Activated CD4-positive, alpha-beta T cell treated with anti-CD3 and anti-CD28 coated beads for 36 hours (primary cell): ENCODE measurements at regions of chr9 and their contacts with region 1.

Region 1: DNA sequence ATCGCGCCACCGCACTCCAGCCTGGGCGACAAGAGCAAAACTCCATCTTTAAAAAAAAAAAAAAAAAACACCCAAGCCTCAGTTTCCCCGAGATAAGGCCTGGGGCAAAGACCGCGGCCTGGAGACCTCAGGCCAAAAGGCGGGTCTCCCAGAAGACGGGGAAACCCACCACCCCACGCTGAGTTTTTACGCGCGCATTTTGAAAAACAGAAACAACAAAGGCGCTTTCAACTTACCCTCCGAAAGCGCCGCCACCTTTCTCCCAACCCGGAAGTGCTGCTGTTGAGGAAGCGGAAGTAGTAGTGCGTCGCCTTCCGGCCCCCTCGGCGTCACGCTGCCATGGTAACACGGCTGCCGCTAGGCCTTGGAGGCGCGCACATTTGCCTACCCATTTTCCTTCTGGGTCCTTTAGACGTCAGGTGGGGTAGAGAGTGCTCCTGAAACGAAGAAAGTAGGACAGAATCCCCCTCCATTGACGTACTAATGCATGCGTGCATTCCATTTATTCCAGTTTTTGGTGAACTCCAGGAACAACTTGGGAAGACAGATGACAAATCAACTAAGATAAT is at the start of gene TTF1:
- DNase-seq: peak; percentile 97
- ATAC-seq: peak; percentile 79
- H3K4me3 Mint-ChIP-seq: peak within 1 kb of the TSS; percentile 96
- H3K27ac Mint-ChIP-seq: peak within 1 kb of the TSS; percentile 91
- H3K4me1 Mint-ChIP-seq: peaks cover 56% of the 10 kb centered on the region
- H3K27me3 Mint-ChIP-seq: peaks cover 9% of the 10 kb centered on the region
- total RNA-seq, gene TTF1: 31.9 to 33.4 TPM

Region 2: DNA sequence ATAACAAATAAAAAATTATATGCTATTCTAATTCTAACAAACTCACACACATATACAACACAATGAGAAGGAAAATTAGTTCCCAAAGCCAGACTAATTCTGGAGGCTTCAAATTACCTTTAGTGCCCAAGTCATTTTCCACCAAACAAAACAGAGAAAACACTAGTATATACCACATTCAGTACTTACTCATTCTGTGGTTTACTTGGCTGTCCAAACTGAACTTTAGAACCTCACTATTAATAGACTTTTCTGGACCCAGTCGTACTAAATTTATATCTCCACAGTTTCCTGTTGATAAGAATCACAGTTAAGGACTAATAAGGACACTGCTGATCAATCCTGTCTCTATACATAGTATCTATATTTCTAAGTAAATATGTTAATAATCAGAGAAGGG is 118.3 kb before region 1 on chr9:
- CTCF ChIA-PET with region 1: no interaction called
- POLR2A ChIA-PET with region 1: no interaction called
- intact Hi-C with region 1: no loop called
- DNase-seq: no peak
- ATAC-seq: no peak
- H3K4me3 Mint-ChIP-seq: no peak overlapping the region
- H3K27ac Mint-ChIP-seq: no peak overlapping the region
- H3K4me1 Mint-ChIP-seq: peaks cover 22% of the 10 kb centered on the region
- H3K27me3 Mint-ChIP-seq: no peaks in the 10 kb centered on the region

Region 3: DNA sequence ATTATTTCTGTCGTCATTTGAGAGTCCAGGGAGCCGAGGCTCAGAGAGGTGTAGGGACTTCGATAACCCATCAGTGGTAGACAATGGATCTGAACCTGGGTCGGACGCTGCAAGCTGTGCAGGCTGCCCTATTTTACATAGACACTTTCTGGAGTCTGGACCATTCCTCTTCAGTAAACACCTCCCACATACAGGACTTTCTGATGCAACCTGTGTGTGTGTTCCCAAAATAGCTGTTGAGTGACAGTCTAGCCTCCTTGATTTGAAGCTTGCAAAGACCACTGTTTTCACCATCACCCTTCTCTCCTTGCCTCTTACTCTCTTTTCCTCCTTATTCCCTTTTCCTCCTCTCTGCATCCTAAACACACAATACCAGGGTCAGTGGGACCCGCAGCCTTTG is 34.1 kb after region 1 on chr9:
- CTCF ChIA-PET with region 1: no interaction called
- POLR2A ChIA-PET with region 1: no interaction called
- intact Hi-C with region 1: no loop called
- DNase-seq: no peak
- ATAC-seq: no peak
- H3K4me3 Mint-ChIP-seq: no peak overlapping the region
- H3K27ac Mint-ChIP-seq: no peak overlapping the region
- H3K4me1 Mint-ChIP-seq: no peaks in the 10 kb centered on the region
- H3K27me3 Mint-ChIP-seq: peaks cover 28% of the 10 kb centered on the region

Region 4: GRCh38 chr9:132451276-132451675 is 44.6 kb after region 1 on chr9:
- CTCF ChIA-PET with region 1: no interaction called
- POLR2A ChIA-PET with region 1: no interaction called
- intact Hi-C with region 1: no loop called
- DNase-seq: peak; percentile 41
- ATAC-seq: peak; percentile 96
- H3K4me3 Mint-ChIP-seq: no peak overlapping the region
- H3K27ac Mint-ChIP-seq: no peak overlapping the region
- H3K4me1 Mint-ChIP-seq: peaks cover 6% of the 10 kb centered on the region
- H3K27me3 Mint-ChIP-seq: peaks cover 21% of the 10 kb centered on the region

Region 5: DNA sequence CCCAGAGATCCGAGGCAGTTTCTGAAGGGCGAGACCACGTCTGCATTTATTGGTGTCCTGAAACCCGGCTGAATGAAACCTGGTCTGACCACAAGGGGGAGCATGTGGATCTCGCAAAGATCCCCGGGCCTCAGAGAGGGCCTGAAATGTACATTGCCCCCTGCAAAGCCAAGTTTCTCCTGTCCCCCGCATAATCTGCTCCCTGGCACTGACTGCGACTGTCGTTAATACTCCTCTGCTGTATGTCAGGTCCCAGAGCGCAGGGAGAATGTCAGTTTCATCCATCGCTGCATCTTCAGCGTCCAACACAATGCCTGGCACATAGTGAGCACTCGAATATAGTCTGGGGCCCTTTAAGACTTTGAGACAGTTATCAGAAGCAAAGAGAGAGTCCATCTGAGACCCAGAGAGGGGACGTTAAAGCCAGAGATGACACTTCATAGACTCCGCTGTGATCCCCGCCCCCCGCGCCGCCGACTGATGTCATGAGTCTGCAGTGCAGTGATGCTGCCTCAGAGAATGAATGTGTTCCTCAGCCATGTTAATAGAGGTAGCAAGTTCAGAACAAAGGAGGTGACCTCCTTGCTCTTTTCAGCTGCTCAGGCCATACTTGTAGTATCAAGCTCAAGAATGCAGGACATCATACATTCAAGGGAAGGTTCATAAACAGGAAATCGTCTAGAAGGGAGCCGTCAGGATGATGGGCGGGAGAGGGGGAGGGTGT is 101.3 kb after region 1 on chr9:
- CTCF ChIA-PET with region 1: no interaction called
- POLR2A ChIA-PET with region 1: no interaction called
- intact Hi-C with region 1: loop called (anchors 1 to 5 kb)
- DNase-seq: peak; percentile 82
- ATAC-seq: peak; percentile 68
- H3K4me3 Mint-ChIP-seq: no peak overlapping the region
- H3K27ac Mint-ChIP-seq: no peak overlapping the region
- H3K4me1 Mint-ChIP-seq: peaks cover 3% of the 10 kb centered on the region
- H3K27me3 Mint-ChIP-seq: peaks cover 3% of the 10 kb centered on the region

Region 6: GRCh38 chr9:132584601-132585560 is 178.2 kb after region 1 on chr9:
- CTCF ChIA-PET with region 1: no interaction called
- POLR2A ChIA-PET with region 1: interaction called, 6 read pairs
- intact Hi-C with region 1: loop called (anchors 2 kb)
- DNase-seq: no peak
- ATAC-seq: no peak
- H3K4me3 Mint-ChIP-seq: no peak overlapping the region
- H3K27ac Mint-ChIP-seq: no peak overlapping the region
- H3K4me1 Mint-ChIP-seq: peaks cover 13% of the 10 kb centered on the region
- H3K27me3 Mint-ChIP-seq: peaks cover 56% of the 10 kb centered on the region

Region 7: DNA sequence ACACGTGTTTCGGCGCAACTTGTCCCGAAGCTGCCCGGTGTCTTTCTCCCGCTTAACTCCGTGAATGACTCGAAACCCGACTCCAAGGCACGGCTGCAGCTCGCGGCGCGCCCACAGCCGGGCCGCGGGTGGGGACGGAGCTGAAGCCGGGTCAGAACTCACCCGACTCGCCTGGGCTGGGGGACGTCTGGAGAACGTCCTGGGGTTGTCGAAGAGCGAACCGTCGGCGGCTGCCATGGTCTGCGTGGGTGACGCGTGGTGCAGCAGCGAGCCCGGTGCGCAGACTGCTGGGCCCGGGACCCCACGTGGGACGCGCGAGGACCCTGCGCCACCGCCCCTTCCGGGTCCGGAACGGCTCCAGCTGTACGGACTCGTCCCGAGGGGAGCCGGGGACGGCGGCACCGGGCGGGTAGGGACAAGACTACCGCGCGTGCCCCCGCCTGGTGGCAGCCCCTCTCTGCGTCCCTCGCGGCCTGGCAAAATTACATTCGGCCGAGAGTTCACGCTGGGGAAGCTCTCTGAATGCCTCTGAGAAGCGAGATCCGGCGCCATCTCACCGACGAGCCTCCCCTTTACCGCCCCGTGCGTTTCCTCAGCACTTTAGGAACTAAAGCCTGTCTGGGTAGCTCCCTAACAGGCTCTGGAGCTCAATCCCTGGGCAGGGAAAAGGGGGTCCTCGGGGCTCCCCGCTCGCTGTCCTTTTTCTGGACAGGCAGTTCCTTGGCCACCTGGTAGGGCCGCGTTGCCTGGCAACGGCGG is 263.2 kb after region 1 on chr9 and contains the start of gene DDX31:
- CTCF ChIA-PET with region 1: no interaction called
- POLR2A ChIA-PET with region 1: no interaction called
- intact Hi-C with region 1: loop called (anchors 1 to 10 kb)
- DNase-seq: peak; percentile 91
- ATAC-seq: peak; percentile 86
- H3K4me3 Mint-ChIP-seq: peak within 1 kb of the TSS; percentile 89
- H3K27ac Mint-ChIP-seq: peak within 1 kb of the TSS; percentile 90
- H3K4me1 Mint-ChIP-seq: peaks cover 49% of the 10 kb centered on the region
- H3K27me3 Mint-ChIP-seq: no peaks in the 10 kb centered on the region
- total RNA-seq, gene DDX31: 20.9 to 21.0 TPM

Region 8: GRCh38 chr9:132877824-132878694 is 471.4 kb after region 1 on chr9 and contains the start of gene AK8:
- CTCF ChIA-PET with region 1: no interaction called
- POLR2A ChIA-PET with region 1: no interaction called
- intact Hi-C with region 1: loop called in 1 of 2 experiments (anchors 2 kb)
- DNase-seq: peak; percentile 86
- ATAC-seq: peak; percentile 76
- H3K4me3 Mint-ChIP-seq: peak within 1 kb of the TSS; percentile 73
- H3K27ac Mint-ChIP-seq: peak within 1 kb of the TSS; percentile 13
- H3K4me1 Mint-ChIP-seq: peaks cover 21% of the 10 kb centered on the region
- H3K27me3 Mint-ChIP-seq: no peaks in the 10 kb centered on the region
- total RNA-seq, gene AK8: 0.21 TPM in 1 of 2 experiments, not detected in the other

Region 9: GRCh38 chr9:133149126-133150107 is 742.8 kb after region 1 on chr9:
- CTCF ChIA-PET with region 1: no interaction called
- POLR2A ChIA-PET with region 1: no interaction called
- intact Hi-C with region 1: loop called in 1 of 2 experiments (anchors 10 kb)
- DNase-seq: peak; percentile 92
- ATAC-seq: peak; percentile 68
- H3K4me3 Mint-ChIP-seq: peak overlapping the region; percentile 63
- H3K27ac Mint-ChIP-seq: peak overlapping the region; percentile 67
- H3K4me1 Mint-ChIP-seq: peaks cover 27% of the 10 kb centered on the region
- H3K27me3 Mint-ChIP-seq: no peaks in the 10 kb centered on the region